Ovary (tissue), 10 donors: ENCODE measurements at regions of chr3 and their contacts with region 1.

Region 1: GRCh38 chr3:13206799-13207646 is 133.8 kb upstream of the IQSEC1 start:
- DNase-seq: no peak
- H3K4me3 ChIP-seq: no peak overlapping the region
- H3K27ac ChIP-seq: no peak overlapping the region
- H3K4me1 ChIP-seq: no peaks in the 10 kb centered on the region
- H3K27me3 ChIP-seq: no peaks in the 10 kb centered on the region
- CTCF ChIP-seq: no peak
- EP300 ChIP-seq: no peak
- POLR2A ChIP-seq: no peak

Region 2: GRCh38 chr3:12663936-12664908 is 542.8 kb before region 1 on chr3 and contains the start of gene RAF1:
- intact Hi-C with region 1: no loop called
- DNase-seq: peak; percentile 98 to 99 (median 98)
- H3K4me3 ChIP-seq: peak within 1 kb of the TSS; percentile 96
- H3K27ac ChIP-seq: peak within 1 kb of the TSS; percentile 99 to 100
- H3K4me1 ChIP-seq: peaks cover 11% of the 10 kb centered on the region
- H3K27me3 ChIP-seq: no peaks in the 10 kb centered on the region
- CTCF ChIP-seq: no peak
- EP300 ChIP-seq: no peak
- POLR2A ChIP-seq: peak; percentile 88
- total RNA-seq, gene RAF1: 75.0 to 106 (median 78.8) TPM

Region 3: DNA sequence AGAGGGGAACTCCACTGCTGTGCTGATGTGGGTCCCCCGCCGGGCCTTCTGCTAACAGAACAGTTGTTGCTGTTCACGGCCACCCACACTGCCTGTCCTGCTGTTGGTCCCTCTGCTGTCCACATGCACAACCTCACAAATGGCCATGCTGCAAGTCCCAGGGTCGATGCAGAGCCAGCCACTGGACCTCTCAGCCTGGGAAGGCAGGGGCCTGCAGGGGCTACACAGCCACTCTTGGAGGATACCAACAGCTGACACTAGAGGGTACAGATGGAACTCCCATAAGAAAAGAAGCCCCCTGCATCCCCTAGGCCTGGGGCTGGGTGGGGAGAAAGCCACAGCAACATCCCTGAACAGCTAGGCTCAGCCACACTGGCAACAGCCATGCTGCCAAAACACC is 29.4 kb before region 1 on chr3:
- intact Hi-C with region 1: loop called in 1 of 4 experiments (anchors 1 kb)
- DNase-seq: no peak
- H3K4me3 ChIP-seq: no peak overlapping the region
- H3K27ac ChIP-seq: no peak overlapping the region
- H3K4me1 ChIP-seq: no peaks in the 10 kb centered on the region
- H3K27me3 ChIP-seq: no peaks in the 10 kb centered on the region
- CTCF ChIP-seq: no peak
- EP300 ChIP-seq: no peak
- POLR2A ChIP-seq: no peak

Region 4: GRCh38 chr3:13189639-13190377 is 17.2 kb before region 1 on chr3:
- intact Hi-C with region 1: no loop called
- DNase-seq: no peak
- H3K4me3 ChIP-seq: no peak overlapping the region
- H3K27ac ChIP-seq: no peak overlapping the region
- H3K4me1 ChIP-seq: no peaks in the 10 kb centered on the region
- H3K27me3 ChIP-seq: no peaks in the 10 kb centered on the region
- CTCF ChIP-seq: no peak
- EP300 ChIP-seq: no peak
- POLR2A ChIP-seq: no peak